Activated T-helper 2 cell treated with anti-CD3 and anti-CD28 coated beads, Interferon-gamma antibody, Interleukin-2, Interleukin-4, amounts not matched to agents 10 μg/mL and 5 μg/mL and 100 μg/mL, durations not matched to agents 14 hours and 24 hours and 36 hours (primary cell): ENCODE measurements at regions of chr1 and their contacts with region 1.

Region 1: DNA sequence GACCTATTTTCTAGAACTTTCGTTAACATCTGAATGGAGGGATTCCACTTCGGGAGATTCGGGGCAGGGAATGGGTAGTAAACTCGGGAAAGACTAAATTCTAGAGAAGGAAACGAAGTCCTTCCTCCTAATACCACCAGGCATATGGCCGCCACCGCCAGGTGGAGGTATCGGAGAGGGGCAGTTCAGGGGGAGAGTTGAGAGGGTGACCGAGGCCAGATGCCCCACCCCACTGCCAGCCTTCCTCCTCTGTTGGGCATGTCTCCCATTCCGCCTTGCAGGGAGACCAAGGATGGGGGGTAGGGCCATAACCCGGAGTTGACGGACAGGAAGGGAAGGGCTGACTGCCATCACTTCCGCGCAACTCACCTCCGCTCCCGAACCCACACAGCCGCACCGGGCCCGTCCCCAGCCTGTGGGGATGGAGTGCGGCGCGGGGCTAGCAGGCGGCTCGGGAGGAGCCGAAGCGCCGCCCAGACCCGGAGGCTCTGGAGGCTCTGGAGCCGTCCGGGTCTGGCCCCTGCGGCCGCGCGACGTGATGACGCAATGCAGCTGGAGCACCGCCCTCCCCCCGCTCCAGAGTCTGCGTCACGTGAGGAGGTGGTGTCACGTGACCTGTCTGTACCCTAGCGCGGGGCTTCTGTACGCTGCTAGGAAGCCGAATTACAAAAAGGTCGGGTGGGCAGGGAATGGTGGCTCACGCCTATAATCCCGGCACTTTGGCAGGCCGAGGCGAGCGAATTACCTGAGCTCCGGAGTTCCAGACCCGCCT is at the start of gene KLHL12:
- DNase-seq: peak; percentile 93
- H3K4me3 Mint-ChIP-seq: peak within 1 kb of the TSS; percentile 85
- H3K27ac Mint-ChIP-seq: peak within 1 kb of the TSS; percentile 80
- H3K4me1 Mint-ChIP-seq: peaks cover 26% of the 10 kb centered on the region
- H3K27me3 Mint-ChIP-seq: peaks cover 3% of the 10 kb centered on the region
- total RNA-seq, gene KLHL12: 27.7 and 29.2 TPM in 2 replicates

Region 2: DNA sequence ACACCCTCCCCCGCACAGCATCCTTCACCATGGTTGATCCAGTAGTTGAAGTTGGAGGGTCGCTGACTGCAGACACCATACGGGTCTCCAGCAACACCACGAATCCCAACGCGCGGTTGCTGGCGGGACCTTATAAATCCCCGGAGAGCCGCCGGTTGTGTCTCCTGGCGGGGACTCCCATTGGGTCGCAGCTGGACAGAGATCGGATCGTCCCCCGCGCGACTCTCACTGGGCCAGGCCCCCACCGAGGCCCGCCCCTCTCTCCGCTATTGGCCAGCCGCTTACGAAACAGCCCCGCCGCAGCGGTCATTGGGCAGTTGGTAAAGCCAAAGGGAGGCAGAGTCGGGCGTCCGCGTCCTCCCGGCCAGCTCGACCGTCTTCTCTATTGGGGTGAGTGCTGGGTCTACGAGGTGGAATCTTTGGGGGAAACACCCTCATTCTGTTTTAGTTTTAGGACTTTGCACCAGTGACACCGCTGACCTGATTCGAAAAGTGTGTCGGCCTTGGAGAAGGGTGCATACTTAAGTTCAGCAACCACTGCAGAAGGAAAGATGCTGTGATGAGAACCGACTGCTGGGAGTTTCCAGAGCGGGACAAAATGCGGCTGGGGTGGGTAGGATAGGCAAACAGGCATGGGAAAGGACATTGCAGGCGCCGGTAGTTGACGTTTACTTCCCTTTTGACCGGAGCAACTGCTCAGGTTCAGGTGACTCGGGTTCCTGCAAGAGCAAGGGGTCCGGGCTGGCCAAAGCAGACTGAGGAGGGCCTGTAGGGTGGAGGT is 65.3 kb before region 1 on chr1:
- intact Hi-C with region 1: no loop called
- DNase-seq: peak; percentile 28
- H3K4me3 Mint-ChIP-seq: peak overlapping the region; percentile 79
- H3K27ac Mint-ChIP-seq: no peak overlapping the region
- H3K4me1 Mint-ChIP-seq: peaks cover 12% of the 10 kb centered on the region
- H3K27me3 Mint-ChIP-seq: peaks cover 47% of the 10 kb centered on the region

Region 3: DNA sequence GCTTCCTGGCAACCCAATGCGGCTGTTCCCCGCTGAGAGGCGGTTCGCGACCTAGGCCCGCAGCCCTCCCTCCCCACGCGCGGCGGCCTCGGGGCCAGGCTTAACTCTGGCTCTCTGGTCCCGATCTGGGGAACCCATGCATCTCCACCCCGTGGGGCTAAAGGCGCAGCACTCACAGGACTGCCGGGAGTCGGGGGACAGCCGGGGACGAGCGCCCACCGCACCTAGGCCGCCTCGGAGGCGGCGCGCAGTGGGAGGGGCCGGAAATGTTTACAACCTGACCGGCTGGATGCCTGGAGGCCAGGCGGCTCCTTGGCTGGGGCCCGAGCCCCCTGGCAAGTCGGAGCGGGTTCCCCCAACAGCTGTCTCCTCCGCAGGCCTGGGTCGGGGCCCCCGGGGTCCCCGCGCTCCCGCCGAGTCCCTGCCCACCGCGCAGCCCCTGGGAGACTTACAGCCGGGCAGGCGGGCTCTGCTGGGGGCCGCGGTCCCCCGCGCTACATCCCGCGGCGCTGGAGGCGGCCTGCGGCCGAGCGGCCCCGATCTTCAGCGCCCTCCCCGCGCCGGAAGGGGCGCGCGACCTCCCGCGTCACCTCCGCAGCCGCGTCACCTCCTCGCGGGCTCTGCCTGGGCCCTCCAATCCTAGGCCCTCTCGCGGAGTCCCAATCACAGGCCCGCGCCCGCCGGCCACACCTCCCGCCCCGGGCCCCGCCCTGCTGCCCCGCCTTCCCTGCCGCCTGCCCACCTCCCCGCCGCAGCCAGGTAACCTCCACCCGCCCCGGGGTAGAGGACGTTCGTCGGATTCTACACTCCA is 31.0 kb after region 1 on chr1 and contains the start of gene ADIPOR1:
- intact Hi-C with region 1: loop called (anchors 2 kb)
- DNase-seq: peak; percentile 92
- H3K4me3 Mint-ChIP-seq: peak within 1 kb of the TSS; percentile 94
- H3K27ac Mint-ChIP-seq: peak within 1 kb of the TSS; percentile 58
- H3K4me1 Mint-ChIP-seq: peaks cover 29% of the 10 kb centered on the region
- H3K27me3 Mint-ChIP-seq: no peaks in the 10 kb centered on the region
- total RNA-seq, gene ADIPOR1: 79.1 and 79.2 TPM in 2 replicates

Region 4: GRCh38 chr1:202968840-202969295 is 42.0 kb after region 1 on chr1:
- intact Hi-C with region 1: loop called (anchors 2 kb)
- DNase-seq: peak; percentile 26
- H3K4me3 Mint-ChIP-seq: peak overlapping the region; percentile 41
- H3K27ac Mint-ChIP-seq: no peak overlapping the region
- H3K4me1 Mint-ChIP-seq: peaks cover 20% of the 10 kb centered on the region
- H3K27me3 Mint-ChIP-seq: peaks cover 14% of the 10 kb centered on the region

Region 5: GRCh38 chr1:202998836-202999750 is 72.2 kb after region 1 on chr1:
- intact Hi-C with region 1: loop called (anchors 2 kb)
- DNase-seq: peak; percentile 32
- H3K4me3 Mint-ChIP-seq: peak overlapping the region; percentile 33
- H3K27ac Mint-ChIP-seq: no peak overlapping the region
- H3K4me1 Mint-ChIP-seq: peaks cover 15% of the 10 kb centered on the region
- H3K27me3 Mint-ChIP-seq: peaks cover 36% of the 10 kb centered on the region

Region 6: DNA sequence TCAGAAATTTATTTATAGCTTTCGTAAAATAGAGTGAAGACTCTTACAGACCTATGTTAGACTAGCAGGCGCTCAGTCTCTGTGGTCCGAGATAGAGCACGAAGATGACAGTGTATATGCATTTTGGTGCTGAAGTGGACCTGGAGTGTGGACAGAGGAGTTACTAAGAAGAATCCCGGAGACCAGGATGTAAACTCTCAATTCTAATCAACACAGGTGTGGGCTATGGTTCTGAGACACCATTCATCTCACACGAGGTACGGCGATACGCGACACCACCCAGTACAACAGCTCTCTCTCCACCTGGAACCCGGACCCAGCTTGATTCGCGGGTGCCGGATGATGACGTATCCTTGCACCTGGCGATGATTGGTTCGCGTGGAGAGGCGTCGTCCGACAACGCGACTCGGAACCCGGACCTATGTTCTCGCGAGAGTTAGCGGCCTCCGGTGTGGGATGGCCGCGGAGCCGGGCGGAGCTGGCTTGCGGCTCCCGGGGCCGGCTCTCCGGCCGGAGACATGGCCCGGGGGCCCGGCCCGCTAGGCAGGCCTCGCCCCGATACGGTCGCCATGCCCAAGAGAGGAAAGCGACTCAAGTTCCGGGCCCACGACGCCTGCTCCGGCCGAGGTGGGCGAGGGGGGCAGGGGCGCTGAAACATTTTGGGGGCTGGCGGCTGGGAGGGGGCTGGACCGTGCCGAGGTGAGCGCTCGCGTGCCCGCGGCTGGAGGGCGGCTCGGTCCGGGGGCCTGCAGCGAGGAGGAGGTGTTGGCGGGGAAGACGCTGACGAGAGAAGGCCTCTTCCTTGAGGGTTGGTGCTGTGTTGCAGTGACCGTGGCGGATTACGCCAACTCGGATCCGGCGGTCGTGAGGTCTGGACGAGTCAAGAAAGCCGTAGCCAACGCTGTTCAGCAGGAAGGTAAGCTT is 80.3 kb after region 1 on chr1 and contains the start of gene TMEM183A:
- intact Hi-C with region 1: loop called (anchors 2 kb)
- DNase-seq: peak; percentile 95
- H3K4me3 Mint-ChIP-seq: peak within 1 kb of the TSS; percentile 88
- H3K27ac Mint-ChIP-seq: peak within 1 kb of the TSS; percentile 93
- H3K4me1 Mint-ChIP-seq: peaks cover 27% of the 10 kb centered on the region
- H3K27me3 Mint-ChIP-seq: no peaks in the 10 kb centered on the region
- total RNA-seq, gene TMEM183A: 74.7 and 75.8 TPM in 2 replicates